CD8-positive, alpha-beta T cell (primary cell): ENCODE measurements at regions of chr11 and their contacts with region 1.

Region 1: DNA sequence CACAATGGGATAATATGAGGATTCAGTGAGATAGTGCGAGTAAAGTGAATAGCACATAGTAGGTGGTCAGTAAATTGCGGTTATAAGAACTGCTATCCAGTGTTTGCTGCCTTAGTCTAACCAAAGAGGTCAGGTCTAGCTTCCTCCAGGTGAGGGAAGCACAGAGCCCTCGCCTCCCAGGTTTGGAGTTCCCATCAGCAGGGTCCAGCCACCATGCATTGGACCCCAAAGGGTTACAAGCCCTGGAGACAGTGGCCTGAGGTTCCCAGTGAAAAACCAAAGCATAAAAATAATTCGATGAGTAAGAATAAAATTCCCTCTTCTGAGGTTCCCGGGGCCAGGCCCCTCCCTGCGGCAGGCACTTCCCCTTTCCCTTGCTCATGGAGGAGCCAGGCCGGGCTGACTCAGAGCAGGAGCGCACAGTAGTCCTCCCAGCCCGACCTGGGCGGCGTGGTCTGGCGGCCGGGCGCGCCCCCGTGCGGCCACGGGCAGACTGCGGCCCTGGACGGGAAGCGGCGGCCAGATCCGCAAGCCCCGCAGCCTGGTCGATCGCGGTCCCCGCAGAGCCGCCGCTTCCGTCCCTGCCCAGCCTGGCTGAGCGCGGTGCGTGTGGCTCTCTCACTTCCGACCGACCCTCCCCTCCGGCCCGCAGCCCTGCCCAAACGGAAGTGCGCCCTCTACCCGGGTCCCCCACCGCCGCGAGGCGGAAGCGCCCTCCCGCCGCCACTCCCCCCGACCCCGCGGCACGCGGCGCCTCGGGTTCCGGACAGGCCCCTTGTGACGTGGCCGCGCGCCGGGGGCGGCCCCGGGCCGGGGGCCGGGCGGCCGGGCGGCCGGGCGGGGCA is at the start of gene SLC39A13:
- DNase-seq: peak; percentile 77 to 97 (median 90)
- ATAC-seq: peak; percentile 88
- H3K4me3 ChIP-seq: peak within 1 kb of the TSS; percentile 70 to 85
- H3K4me3 Mint-ChIP-seq: peak within 1 kb of the TSS; percentile 93
- H3K27ac ChIP-seq: peak within 1 kb of the TSS; percentile 64 to 87
- H3K27ac Mint-ChIP-seq: peak within 1 kb of the TSS; percentile 96
- H3K4me1 ChIP-seq: peaks cover 18% of the 10 kb centered on the region
- H3K4me1 Mint-ChIP-seq: peaks cover 25% of the 10 kb centered on the region
- H3K27me3 ChIP-seq: no peaks in the 10 kb centered on the region
- H3K27me3 Mint-ChIP-seq: no peaks in the 10 kb centered on the region
- CTCF ChIP-seq: peak; percentile 89
- total RNA-seq, gene SLC39A13: 34.0 to 34.6 TPM

Region 2: GRCh38 chr11:46308631-46309419 is 1099.1 kb before region 1 on chr11:
- CTCF ChIA-PET with region 1: no interaction called
- POLR2A ChIA-PET with region 1: no interaction called
- intact Hi-C with region 1: no loop called
- DNase-seq: peak; percentile 22 to 78 (median 65)
- ATAC-seq: peak; percentile 90
- H3K4me3 ChIP-seq: no peak overlapping the region
- H3K4me3 Mint-ChIP-seq: no peak overlapping the region
- H3K27ac ChIP-seq: no peak overlapping the region
- H3K27ac Mint-ChIP-seq: no peak overlapping the region
- H3K4me1 ChIP-seq: peaks cover 15% of the 10 kb centered on the region
- H3K4me1 Mint-ChIP-seq: peaks cover 11% of the 10 kb centered on the region
- H3K27me3 ChIP-seq: no peaks in the 10 kb centered on the region
- H3K27me3 Mint-ChIP-seq: no peaks in the 10 kb centered on the region
- CTCF ChIP-seq: peak; percentile 85

Region 3: DNA sequence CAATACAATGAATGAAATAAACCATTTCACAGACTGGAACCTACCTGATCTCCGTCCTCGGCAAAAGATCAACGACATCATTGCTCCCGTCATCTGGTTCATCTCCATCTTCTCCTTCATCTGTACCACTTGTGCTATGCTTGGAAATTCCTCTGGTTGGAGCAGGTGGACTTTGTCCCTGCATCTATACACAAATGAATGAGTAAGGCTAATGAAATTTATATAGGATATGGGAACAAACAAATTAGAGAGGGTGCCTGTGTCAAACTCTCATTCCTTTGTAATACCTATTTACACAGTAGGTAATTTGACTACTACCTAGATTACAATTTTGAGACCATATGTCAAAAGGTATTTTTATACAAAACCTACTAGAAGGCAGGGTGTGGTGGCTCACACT is 629.6 kb before region 1 on chr11:
- CTCF ChIA-PET with region 1: no interaction called
- POLR2A ChIA-PET with region 1: no interaction called
- intact Hi-C with region 1: no loop called
- DNase-seq: no peak
- ATAC-seq: no peak
- H3K4me3 ChIP-seq: no peak overlapping the region
- H3K4me3 Mint-ChIP-seq: no peak overlapping the region
- H3K27ac ChIP-seq: no peak overlapping the region
- H3K27ac Mint-ChIP-seq: no peak overlapping the region
- H3K4me1 ChIP-seq: no peaks in the 10 kb centered on the region
- H3K4me1 Mint-ChIP-seq: no peaks in the 10 kb centered on the region
- H3K27me3 ChIP-seq: no peaks in the 10 kb centered on the region
- H3K27me3 Mint-ChIP-seq: no peaks in the 10 kb centered on the region
- CTCF ChIP-seq: no peak

Region 4: GRCh38 chr11:47248664-47249377 is 159.1 kb before region 1 on chr11 and contains the start of gene ACP2:
- CTCF ChIA-PET with region 1: interaction called, 6 read pairs
- POLR2A ChIA-PET with region 1: interaction called, 7 read pairs
- intact Hi-C with region 1: loop called in 1 of 2 experiments (anchors 2 kb)
- DNase-seq: peak; percentile 70 to 93 (median 85)
- ATAC-seq: peak; percentile 97
- H3K4me3 ChIP-seq: peak within 1 kb of the TSS; percentile 81 to 90
- H3K4me3 Mint-ChIP-seq: peak within 1 kb of the TSS; percentile 100
- H3K27ac ChIP-seq: peak within 1 kb of the TSS; percentile 63 to 83
- H3K27ac Mint-ChIP-seq: peak within 1 kb of the TSS; percentile 100
- H3K4me1 ChIP-seq: peaks cover 17% of the 10 kb centered on the region
- H3K4me1 Mint-ChIP-seq: peaks cover 32% of the 10 kb centered on the region
- H3K27me3 ChIP-seq: no peaks in the 10 kb centered on the region
- H3K27me3 Mint-ChIP-seq: no peaks in the 10 kb centered on the region
- CTCF ChIP-seq: no peak
- total RNA-seq, gene ACP2: 18.3 to 22.6 TPM

Region 5: GRCh38 chr11:47329987-47330931 is 77.7 kb before region 1 on chr11:
- CTCF ChIA-PET with region 1: interaction called, 11 read pairs
- POLR2A ChIA-PET with region 1: no interaction called
- intact Hi-C with region 1: loop called in 1 of 2 experiments (anchors 5 kb)
- DNase-seq: peak in 1 of 9 experiments; percentile 19
- ATAC-seq: peak; percentile 32
- H3K4me3 ChIP-seq: no peak overlapping the region
- H3K4me3 Mint-ChIP-seq: no peak overlapping the region
- H3K27ac ChIP-seq: no peak overlapping the region
- H3K27ac Mint-ChIP-seq: no peak overlapping the region
- H3K4me1 ChIP-seq: no peaks in the 10 kb centered on the region
- H3K4me1 Mint-ChIP-seq: no peaks in the 10 kb centered on the region
- H3K27me3 ChIP-seq: no peaks in the 10 kb centered on the region
- H3K27me3 Mint-ChIP-seq: no peaks in the 10 kb centered on the region
- CTCF ChIP-seq: no peak

Region 6: GRCh38 chr11:47394322-47395222 is 13.4 kb before region 1 on chr11:
- CTCF ChIA-PET with region 1: interaction called, 26 read pairs
- POLR2A ChIA-PET with region 1: interaction called, 14 read pairs
- intact Hi-C with region 1: loop called in 1 of 2 experiments (anchors 1 kb)
- DNase-seq: peak in 8 of 9 experiments; percentile 47 to 84 (median 63)
- ATAC-seq: peak; percentile 71
- H3K4me3 ChIP-seq: peak overlapping the region; percentile 41 to 50
- H3K4me3 Mint-ChIP-seq: peak overlapping the region; percentile 72
- H3K27ac ChIP-seq: peak overlapping the region; percentile 68 to 96
- H3K27ac Mint-ChIP-seq: peak overlapping the region; percentile 94
- H3K4me1 ChIP-seq: peaks cover 54% of the 10 kb centered on the region
- H3K4me1 Mint-ChIP-seq: peaks cover 65% of the 10 kb centered on the region
- H3K27me3 ChIP-seq: no peaks in the 10 kb centered on the region
- H3K27me3 Mint-ChIP-seq: no peaks in the 10 kb centered on the region
- CTCF ChIP-seq: no peak

Region 7: GRCh38 chr11:47437218-47437745 is 29.3 kb after region 1 on chr11:
- CTCF ChIA-PET with region 1: no interaction called
- POLR2A ChIA-PET with region 1: no interaction called
- intact Hi-C with region 1: no loop called
- DNase-seq: no peak
- ATAC-seq: no peak
- H3K4me3 ChIP-seq: no peak overlapping the region
- H3K4me3 Mint-ChIP-seq: no peak overlapping the region
- H3K27ac ChIP-seq: no peak overlapping the region
- H3K27ac Mint-ChIP-seq: no peak overlapping the region
- H3K4me1 ChIP-seq: no peaks in the 10 kb centered on the region
- H3K4me1 Mint-ChIP-seq: no peaks in the 10 kb centered on the region
- H3K27me3 ChIP-seq: no peaks in the 10 kb centered on the region
- H3K27me3 Mint-ChIP-seq: no peaks in the 10 kb centered on the region
- CTCF ChIP-seq: no peak

Region 8: GRCh38 chr11:47642099-47642855 is 234.3 kb after region 1 on chr11 and contains the start of gene MTCH2:
- CTCF ChIA-PET with region 1: no interaction called
- POLR2A ChIA-PET with region 1: no interaction called
- intact Hi-C with region 1: loop called in 1 of 2 experiments (anchors 5 kb)
- DNase-seq: peak; percentile 91 to 98 (median 95)
- ATAC-seq: peak; percentile 95
- H3K4me3 ChIP-seq: peak within 1 kb of the TSS; percentile 42 to 91
- H3K4me3 Mint-ChIP-seq: peak within 1 kb of the TSS; percentile 96
- H3K27ac ChIP-seq: peak within 1 kb of the TSS; percentile 55 to 96
- H3K27ac Mint-ChIP-seq: peak within 1 kb of the TSS; percentile 97
- H3K4me1 ChIP-seq: peaks cover 18% of the 10 kb centered on the region
- H3K4me1 Mint-ChIP-seq: peaks cover 32% of the 10 kb centered on the region
- H3K27me3 ChIP-seq: no peaks in the 10 kb centered on the region
- H3K27me3 Mint-ChIP-seq: no peaks in the 10 kb centered on the region
- CTCF ChIP-seq: no peak
- total RNA-seq, gene MTCH2: 16.4 to 19.5 TPM

Region 9: GRCh38 chr11:48341466-48341865 is 933.5 kb after region 1 on chr11:
- CTCF ChIA-PET with region 1: no interaction called
- POLR2A ChIA-PET with region 1: no interaction called
- intact Hi-C with region 1: no loop called
- DNase-seq: peak in 3 of 9 experiments; percentile 22 to 55 (median 24)
- ATAC-seq: no peak
- H3K4me3 ChIP-seq: no peak overlapping the region
- H3K4me3 Mint-ChIP-seq: no peak overlapping the region
- H3K27ac ChIP-seq: no peak overlapping the region
- H3K27ac Mint-ChIP-seq: peak overlapping the region; percentile 6
- H3K4me1 ChIP-seq: peaks cover 7% of the 10 kb centered on the region
- H3K4me1 Mint-ChIP-seq: peaks cover 21% of the 10 kb centered on the region
- H3K27me3 ChIP-seq: no peaks in the 10 kb centered on the region
- H3K27me3 Mint-ChIP-seq: no peaks in the 10 kb centered on the region
- CTCF ChIP-seq: no peak